Heart right ventricle (tissue), 16 donors: ENCODE measurements at regions of chr9 and their contacts with region 1.

Region 1: DNA sequence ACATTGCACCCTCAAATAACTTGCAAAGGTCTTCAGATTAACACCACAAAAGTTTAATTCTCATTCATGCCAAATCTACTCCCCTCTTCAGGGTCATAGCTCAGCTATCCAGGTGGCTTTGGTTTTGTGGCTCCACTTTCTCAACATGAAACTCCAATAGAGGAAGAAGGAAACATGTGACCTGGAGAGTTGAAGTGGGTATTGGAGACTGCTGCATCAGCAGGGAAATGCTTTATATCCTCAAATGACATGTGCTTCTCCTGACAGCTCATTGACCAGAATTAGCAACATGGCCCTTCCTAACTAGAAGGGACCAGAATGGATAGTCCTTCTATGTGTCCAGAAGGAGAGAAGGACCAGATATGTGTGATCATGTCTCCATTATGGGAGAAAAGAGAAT is 73.6 kb downstream of the TLR4 start:
- DNase-seq: peak in 1 of 2 donors; percentile 6
- ATAC-seq: peak in 7 of 8 donors; percentile 41 to 79 (median 64)
- H3K4me3 ChIP-seq: no peak overlapping the region
- H3K27ac ChIP-seq: peak overlapping the region in 1 of 10 donors; percentile 11
- H3K4me1 ChIP-seq: peaks cover 0 to 48% (median 16%) of the 10 kb centered on the region in 9 donors
- H3K27me3 ChIP-seq: no peaks in the 10 kb centered on the region
- CTCF ChIP-seq: no peak

Region 2: GRCh38 chr9:117644133-117644931 is 133.5 kb before region 1 on chr9:
- intact Hi-C with region 1: loop called in 7 of 10 experiments (anchors 2 to 10 kb)
- DNase-seq: peak; percentile 71 to 73
- ATAC-seq: peak; percentile 55 to 92 (median 82)
- H3K4me3 ChIP-seq: peak overlapping the region in 8 of 10 donors; percentile 15 to 48 (median 38)
- H3K27ac ChIP-seq: peak overlapping the region in 6 of 10 donors; percentile 37 to 80 (median 63)
- H3K4me1 ChIP-seq: peaks cover 0 to 25% (median 13%) of the 10 kb centered on the region in 9 donors
- H3K27me3 ChIP-seq: peaks cover 0 to 46% (median 17%) of the 10 kb centered on the region in 7 donors
- CTCF ChIP-seq: peak; percentile 92 to 99 (median 97)